H1 (cell line): ENCODE measurements at regions of chr11 and their contacts with region 1.

Region 1: DNA sequence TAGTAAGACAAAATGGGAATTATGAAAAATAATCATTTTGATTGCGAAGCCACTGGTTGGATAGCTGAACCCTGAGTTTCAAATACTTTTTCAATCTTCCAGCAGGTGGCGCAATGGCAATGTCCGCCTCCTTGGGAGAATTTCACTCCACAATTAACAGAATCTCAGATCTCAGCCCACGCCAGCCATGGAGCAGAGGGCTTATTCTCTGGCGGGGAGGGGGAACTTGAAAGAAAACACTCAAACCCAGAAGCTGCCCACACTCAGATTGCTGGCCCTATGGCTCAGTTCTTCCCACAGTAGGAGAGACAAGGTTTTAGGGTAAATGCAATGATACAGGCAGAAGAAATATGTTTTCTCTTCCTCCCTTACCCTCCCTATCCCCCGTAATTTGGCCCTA is 38.7 kb upstream of the RCN1 start:
- DNase-seq: peak in 1 of 2 experiments; percentile 73
- H3K4me3 ChIP-seq: no peak overlapping the region
- H3K27ac ChIP-seq: no peak overlapping the region
- H3K4me1 ChIP-seq: no peaks in the 10 kb centered on the region
- H3K27me3 ChIP-seq: no peaks in the 10 kb centered on the region
- CTCF ChIP-seq: peak; percentile 21 to 79 (median 72)
- EP300 ChIP-seq: no peak
- POLR2A ChIP-seq: no peak
- RAD21 ChIP-seq: peak; percentile 71 to 78

Region 2: GRCh38 chr11:31968461-31969358 is 83.5 kb before region 1 on chr11:
- CTCF ChIA-PET with region 1: no interaction called
- POLR2A ChIA-PET with region 1: no interaction called
- DNase-seq: no peak
- H3K4me3 ChIP-seq: no peak overlapping the region
- H3K27ac ChIP-seq: no peak overlapping the region
- H3K4me1 ChIP-seq: no peaks in the 10 kb centered on the region
- H3K27me3 ChIP-seq: no peaks in the 10 kb centered on the region
- CTCF ChIP-seq: no peak
- EP300 ChIP-seq: no peak
- POLR2A ChIP-seq: no peak
- RAD21 ChIP-seq: no peak

Region 3: GRCh38 chr11:32029721-32030120 is 22.5 kb before region 1 on chr11:
- CTCF ChIA-PET with region 1: interaction called, 15 read pairs
- POLR2A ChIA-PET with region 1: no interaction called
- DNase-seq: no peak
- H3K4me3 ChIP-seq: no peak overlapping the region
- H3K27ac ChIP-seq: no peak overlapping the region
- H3K4me1 ChIP-seq: no peaks in the 10 kb centered on the region
- H3K27me3 ChIP-seq: peaks cover 0 to 1% (median 0%) of the 10 kb centered on the region in 4 experiments; a peak in 1 of 7 replicates
- CTCF ChIP-seq: no peak
- EP300 ChIP-seq: no peak
- POLR2A ChIP-seq: no peak
- RAD21 ChIP-seq: no peak

Region 4: DNA sequence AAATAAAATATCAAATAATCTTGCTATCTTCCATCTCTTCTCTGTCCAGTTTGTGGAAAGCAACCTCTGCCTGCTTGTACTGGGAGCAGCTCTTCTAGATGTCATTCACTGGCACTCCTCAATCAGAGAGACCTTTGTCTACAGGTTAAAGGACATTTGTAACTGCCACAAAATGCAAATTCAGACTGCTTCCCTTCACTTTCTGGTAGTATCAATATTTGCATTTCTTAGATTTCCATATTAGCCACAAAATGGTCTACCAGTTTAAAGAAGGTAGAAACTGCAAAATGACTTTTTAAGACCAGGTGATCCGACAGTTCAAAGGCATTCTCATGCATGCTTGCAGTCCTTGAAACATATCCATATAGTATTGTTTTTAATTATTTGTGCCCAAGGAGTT is 13.1 kb before region 1 on chr11:
- CTCF ChIA-PET with region 1: interaction called, 17 read pairs
- POLR2A ChIA-PET with region 1: no interaction called
- DNase-seq: no peak
- H3K4me3 ChIP-seq: no peak overlapping the region
- H3K27ac ChIP-seq: no peak overlapping the region
- H3K4me1 ChIP-seq: no peaks in the 10 kb centered on the region
- H3K27me3 ChIP-seq: no peaks in the 10 kb centered on the region
- CTCF ChIP-seq: no peak
- EP300 ChIP-seq: no peak
- POLR2A ChIP-seq: no peak
- RAD21 ChIP-seq: no peak

Region 5: GRCh38 chr11:32071811-32072210 is 19.6 kb after region 1 on chr11:
- CTCF ChIA-PET with region 1: interaction called, 187 read pairs
- POLR2A ChIA-PET with region 1: no interaction called
- DNase-seq: no peak
- H3K4me3 ChIP-seq: no peak overlapping the region
- H3K27ac ChIP-seq: no peak overlapping the region
- H3K4me1 ChIP-seq: peaks cover 4 to 13% (median 9%) of the 10 kb centered on the region in 4 experiments; a peak in 6 of 7 replicates
- H3K27me3 ChIP-seq: no peaks in the 10 kb centered on the region
- CTCF ChIP-seq: peak in 2 of 3 experiments; percentile 35 to 58; a peak in 3 of 4 replicates
- EP300 ChIP-seq: no peak
- POLR2A ChIP-seq: no peak
- RAD21 ChIP-seq: peak; percentile 19 to 35; a peak in 2 of 4 replicates

Region 6: DNA sequence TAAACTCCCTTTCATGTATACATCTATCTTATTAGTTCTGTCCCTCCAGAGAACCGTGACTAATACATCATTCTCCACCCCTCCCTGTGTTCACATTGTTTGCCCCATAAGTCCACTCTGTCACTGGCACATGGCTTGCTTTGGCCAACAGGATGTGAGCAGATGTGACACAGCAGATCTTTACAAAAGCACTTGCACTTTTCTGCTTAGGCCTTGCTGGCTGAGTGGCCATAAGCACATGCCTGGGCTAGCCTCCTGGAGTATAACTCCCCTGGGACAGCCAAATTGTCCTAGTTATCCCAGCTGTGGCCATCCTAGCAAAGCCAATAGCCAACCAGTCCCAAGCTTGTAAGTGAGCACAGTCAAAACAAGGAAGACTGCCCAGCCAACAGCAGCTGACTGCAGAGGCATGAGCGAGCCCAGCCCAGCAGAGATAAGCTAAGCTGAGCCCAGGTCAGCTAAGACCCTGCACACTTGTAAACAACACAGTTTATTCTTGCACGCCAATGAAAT is 29.0 kb after region 1 on chr11:
- CTCF ChIA-PET with region 1: interaction called, 10 read pairs
- POLR2A ChIA-PET with region 1: no interaction called
- DNase-seq: no peak
- H3K4me3 ChIP-seq: no peak overlapping the region
- H3K27ac ChIP-seq: no peak overlapping the region
- H3K4me1 ChIP-seq: peaks cover 0 to 3% (median 1%) of the 10 kb centered on the region in 4 experiments; a peak in 4 of 7 replicates
- H3K27me3 ChIP-seq: no peaks in the 10 kb centered on the region
- CTCF ChIP-seq: no peak
- EP300 ChIP-seq: no peak
- POLR2A ChIP-seq: no peak
- RAD21 ChIP-seq: no peak

Region 7: DNA sequence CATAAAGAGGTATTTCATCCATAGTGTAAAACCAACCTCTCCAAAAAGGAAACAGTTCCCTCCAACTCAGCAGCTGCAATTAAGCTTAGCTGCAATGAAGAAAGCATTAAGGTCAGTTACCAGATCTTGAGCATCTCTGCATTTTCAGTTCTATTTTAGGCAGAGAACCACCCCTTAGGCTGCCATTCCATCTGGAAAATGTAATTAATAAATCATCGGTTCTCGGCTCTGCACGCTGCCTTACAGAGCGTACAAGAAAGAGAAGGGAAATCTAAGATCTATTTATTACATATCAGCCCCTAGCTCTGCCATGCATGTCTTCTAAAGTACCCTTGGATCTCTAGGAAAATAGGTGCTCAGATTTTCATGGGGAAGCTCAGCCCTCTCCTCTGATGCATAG is 110.1 kb after region 1 on chr11:
- CTCF ChIA-PET with region 1: interaction called, 25 read pairs
- POLR2A ChIA-PET with region 1: no interaction called
- DNase-seq: no peak
- H3K4me3 ChIP-seq: no peak overlapping the region
- H3K27ac ChIP-seq: no peak overlapping the region
- H3K4me1 ChIP-seq: no peaks in the 10 kb centered on the region
- H3K27me3 ChIP-seq: no peaks in the 10 kb centered on the region
- CTCF ChIP-seq: no peak
- EP300 ChIP-seq: no peak
- POLR2A ChIP-seq: no peak
- RAD21 ChIP-seq: no peak

Region 8: GRCh38 chr11:32176223-32176934 is 124.2 kb after region 1 on chr11:
- CTCF ChIA-PET with region 1: interaction called, 73 read pairs
- POLR2A ChIA-PET with region 1: no interaction called
- DNase-seq: peak; percentile 59 to 91
- H3K4me3 ChIP-seq: no peak overlapping the region
- H3K27ac ChIP-seq: no peak overlapping the region
- H3K4me1 ChIP-seq: no peaks in the 10 kb centered on the region
- H3K27me3 ChIP-seq: no peaks in the 10 kb centered on the region
- CTCF ChIP-seq: peak; percentile 65 to 87 (median 84)
- EP300 ChIP-seq: no peak
- POLR2A ChIP-seq: no peak
- RAD21 ChIP-seq: peak; percentile 91 to 94